ENCODE measurements at regions of chr12 and their contacts with region 1.

Region 1: DNA sequence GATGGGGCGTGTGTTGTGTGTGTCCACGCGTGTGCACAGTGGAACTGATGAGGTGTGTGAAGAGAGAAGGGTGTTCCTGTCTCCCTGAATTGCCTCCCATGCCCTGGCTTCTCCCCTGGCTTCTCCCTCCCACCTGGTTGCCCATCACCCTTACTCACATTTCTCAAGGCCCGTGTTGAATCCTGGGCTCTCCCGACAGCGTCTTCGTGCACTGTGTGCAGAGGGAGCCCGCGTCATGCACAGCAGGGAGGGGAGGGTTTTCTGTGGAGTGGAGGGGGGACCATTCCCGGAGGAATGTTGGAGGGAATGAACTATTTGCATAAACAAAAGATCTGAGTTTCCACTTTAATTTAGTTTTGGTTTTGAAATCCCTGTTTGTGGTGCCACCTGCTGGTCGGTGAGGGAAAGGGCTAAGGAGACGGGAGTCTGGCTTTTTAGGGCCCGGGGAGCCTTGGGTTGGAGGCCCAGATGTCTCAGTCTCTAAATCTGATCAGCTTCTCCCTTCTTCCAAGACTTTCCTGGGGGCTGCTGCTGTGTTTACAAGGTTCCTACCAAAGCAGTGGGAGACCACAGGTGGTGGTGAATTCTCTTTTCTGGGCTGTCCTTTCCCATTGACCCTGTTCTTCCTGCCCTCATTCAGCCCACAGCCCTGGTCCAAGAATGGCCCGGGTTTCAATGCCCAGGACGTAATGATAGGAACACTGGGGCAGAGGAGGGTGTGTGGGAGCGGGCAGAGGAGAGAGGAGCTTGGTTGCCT is at the start of gene C1R:
- DNase-seq: peak; percentile 65
- H3K4me3 Mint-ChIP-seq: peak within 1 kb of the TSS; percentile 57
- H3K27ac Mint-ChIP-seq: no peak within 1 kb of the TSS
- H3K4me1 Mint-ChIP-seq: no peaks in the 10 kb centered on the region
- H3K27me3 Mint-ChIP-seq: peaks cover 50% of the 10 kb centered on the region
- CTCF ChIP-seq: peak; percentile 85
- total RNA-seq, gene C1R: 7.6 and 7.9 TPM in 2 replicates

Region 2: GRCh38 chr12:6355491-6356371 is 736.7 kb before region 1 on chr12:
- CTCF ChIA-PET with region 1: no interaction called
- intact Hi-C with region 1: no loop called
- DNase-seq: no peak
- H3K4me3 Mint-ChIP-seq: no peak overlapping the region
- H3K27ac Mint-ChIP-seq: no peak overlapping the region
- H3K4me1 Mint-ChIP-seq: peaks cover 29% of the 10 kb centered on the region
- H3K27me3 Mint-ChIP-seq: no peaks in the 10 kb centered on the region
- CTCF ChIP-seq: no peak

Region 3: GRCh38 chr12:7018350-7019042 is 73.9 kb before region 1 on chr12 and contains the start of gene LPCAT3:
- CTCF ChIA-PET with region 1: no interaction called
- intact Hi-C with region 1: loop called (anchors 5 kb)
- DNase-seq: peak; percentile 98
- H3K4me3 Mint-ChIP-seq: peak within 1 kb of the TSS; percentile 85
- H3K27ac Mint-ChIP-seq: peak within 1 kb of the TSS; percentile 84
- H3K4me1 Mint-ChIP-seq: peaks cover 16% of the 10 kb centered on the region
- H3K27me3 Mint-ChIP-seq: no peaks in the 10 kb centered on the region
- CTCF ChIP-seq: peak; percentile 83
- total RNA-seq, gene LPCAT3: 30.2 and 31.7 TPM in 2 replicates

Region 4: GRCh38 chr12:7060353-7060954 is 32.0 kb before region 1 on chr12 and contains the start of gene C1S:
- CTCF ChIA-PET with region 1: no interaction called
- intact Hi-C with region 1: loop called (anchors 1 kb)
- DNase-seq: peak; percentile 63
- H3K4me3 Mint-ChIP-seq: no peak within 1 kb of the TSS
- H3K27ac Mint-ChIP-seq: no peak within 1 kb of the TSS
- H3K4me1 Mint-ChIP-seq: peaks cover 14% of the 10 kb centered on the region
- H3K27me3 Mint-ChIP-seq: peaks cover 14% of the 10 kb centered on the region
- CTCF ChIP-seq: peak; percentile 26
- total RNA-seq, gene C1S: 7.1 and 9.7 TPM in 2 replicates

Region 5: GRCh38 chr12:7188562-7189397 is 96.4 kb after region 1 on chr12:
- CTCF ChIA-PET with region 1: no interaction called
- intact Hi-C with region 1: no loop called
- DNase-seq: peak; percentile 74
- H3K4me3 Mint-ChIP-seq: peak overlapping the region; percentile 90
- H3K27ac Mint-ChIP-seq: peak overlapping the region; percentile 89
- H3K4me1 Mint-ChIP-seq: peaks cover 27% of the 10 kb centered on the region
- H3K27me3 Mint-ChIP-seq: peaks cover 24% of the 10 kb centered on the region
- CTCF ChIP-seq: peak; percentile 46

Measured in Calu3 (cell line).